HepG2 (cell line): ENCODE measurements at regions of chr11 and their contacts with region 1.

Region 1: GRCh38 chr11:62169091-62169847 is 20.7 kb upstream of the SCGB1D1 start:
- DNase-seq: no peak
- ATAC-seq: peak; percentile 38; the same call in 1 of the 3 replicates
- H3K4me3 ChIP-seq: no peak overlapping the region
- H3K27ac ChIP-seq: no peak overlapping the region
- H3K4me1 ChIP-seq: no peaks in the 10 kb centered on the region
- H3K27me3 ChIP-seq: peaks cover 0 to 39% of the 10 kb centered on the region in 2 experiments; a peak in 4 of 5 replicates
- CTCF ChIP-seq: no peak
- EP300 ChIP-seq: no peak
- POLR2A ChIP-seq: no peak
- RAD21 ChIP-seq: no peak

Region 2: DNA sequence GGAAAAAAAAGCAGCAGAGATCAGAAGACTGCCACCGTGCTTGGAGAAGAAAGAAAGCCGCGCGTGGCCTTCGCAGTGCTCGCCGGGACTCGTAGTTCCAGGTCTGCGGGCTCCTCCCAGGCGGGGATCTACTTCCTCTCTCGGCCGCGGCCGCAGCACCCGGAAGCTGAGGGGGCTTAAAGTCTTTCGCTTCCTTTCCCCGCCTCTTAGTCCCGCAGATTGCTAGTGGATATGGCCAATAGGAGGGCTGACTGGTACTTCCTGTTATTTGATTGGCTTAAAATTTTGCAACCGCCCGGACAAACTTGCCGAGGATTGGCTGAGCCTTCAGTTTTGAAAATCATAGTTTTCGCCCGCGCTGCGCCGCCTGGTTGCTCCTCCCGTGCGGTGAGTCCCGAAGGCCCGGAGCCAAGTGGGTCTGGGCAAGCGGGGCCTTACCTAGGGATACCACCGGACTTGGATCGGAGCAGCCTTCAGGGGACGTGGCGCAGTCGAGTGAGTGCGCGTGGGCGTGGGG is 45.5 kb before region 1 on chr11 and contains the start of gene INCENP:
- CTCF ChIA-PET with region 1: no interaction called
- POLR2A ChIA-PET with region 1: no interaction called
- in situ Hi-C with region 1: no loop called
- intact Hi-C with region 1: no loop called
- DNase-seq: peak; percentile 99
- ATAC-seq: peak; percentile 96
- H3K4me3 ChIP-seq: peak within 1 kb of the TSS; percentile 72 to 99 (median 87)
- H3K27ac ChIP-seq: peak within 1 kb of the TSS; percentile 71
- H3K4me1 ChIP-seq: peaks cover 42% of the 10 kb centered on the region
- H3K27me3 ChIP-seq: no peaks in the 10 kb centered on the region; a peak in 1 of 5 replicates
- CTCF ChIP-seq: no peak; the same call in 1 of the 2 replicates
- EP300 ChIP-seq: no peak
- POLR2A ChIP-seq: peak; percentile 41 to 58; a peak in 2 of 4 replicates
- RAD21 ChIP-seq: no peak
- total RNA-seq, gene INCENP: 37.3 and 38.1 TPM in 2 replicates

Region 3: DNA sequence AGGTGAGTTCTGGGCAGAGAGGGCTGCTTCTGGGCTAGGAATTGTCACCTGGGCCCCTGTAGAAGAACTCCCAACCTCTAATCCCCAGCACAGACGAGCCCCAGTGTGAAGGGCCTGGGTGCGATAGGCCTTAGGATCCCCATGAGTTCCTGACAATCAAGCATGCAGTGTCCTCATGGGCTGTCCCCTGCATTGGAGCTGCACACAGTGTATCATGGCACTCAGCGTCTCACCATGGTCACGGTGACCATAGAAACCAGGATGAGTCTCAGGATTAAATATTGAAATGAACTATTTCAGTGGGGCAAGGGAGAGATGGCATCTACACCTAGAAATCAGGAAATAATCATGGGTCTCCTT is 39.5 kb after region 1 on chr11:
- CTCF ChIA-PET with region 1: interaction called, 7 read pairs
- POLR2A ChIA-PET with region 1: no interaction called
- in situ Hi-C with region 1: loop called (anchors 5 kb)
- intact Hi-C with region 1: loop called (anchors 2 kb)
- DNase-seq: no peak
- ATAC-seq: no peak
- H3K4me3 ChIP-seq: no peak overlapping the region
- H3K27ac ChIP-seq: no peak overlapping the region
- H3K4me1 ChIP-seq: no peaks in the 10 kb centered on the region
- H3K27me3 ChIP-seq: peaks cover 0 to 18% of the 10 kb centered on the region in 2 experiments; a peak in 2 of 5 replicates
- CTCF ChIP-seq: no peak
- EP300 ChIP-seq: no peak
- POLR2A ChIP-seq: no peak
- RAD21 ChIP-seq: no peak

Region 4: GRCh38 chr11:62324738-62325556 is 155.7 kb after region 1 on chr11:
- CTCF ChIA-PET with region 1: interaction called, 16 read pairs
- POLR2A ChIA-PET with region 1: no interaction called
- in situ Hi-C with region 1: no loop called
- intact Hi-C with region 1: loop called (anchors 1 kb)
- DNase-seq: peak; percentile 70
- ATAC-seq: peak; percentile 99
- H3K4me3 ChIP-seq: no peak overlapping the region
- H3K27ac ChIP-seq: no peak overlapping the region
- H3K4me1 ChIP-seq: peaks cover 32% of the 10 kb centered on the region
- H3K27me3 ChIP-seq: peaks cover 0 to 22% of the 10 kb centered on the region in 2 experiments; a peak in 1 of 5 replicates
- CTCF ChIP-seq: peak; percentile 95
- EP300 ChIP-seq: no peak
- POLR2A ChIP-seq: no peak
- RAD21 ChIP-seq: peak; percentile 97